Activated CD8-positive, alpha-beta T cell treated with anti-CD3 and anti-CD28 coated beads for 36 hours (primary cell): ENCODE measurements at regions of chr6 and their contacts with region 1.

Region 1: DNA sequence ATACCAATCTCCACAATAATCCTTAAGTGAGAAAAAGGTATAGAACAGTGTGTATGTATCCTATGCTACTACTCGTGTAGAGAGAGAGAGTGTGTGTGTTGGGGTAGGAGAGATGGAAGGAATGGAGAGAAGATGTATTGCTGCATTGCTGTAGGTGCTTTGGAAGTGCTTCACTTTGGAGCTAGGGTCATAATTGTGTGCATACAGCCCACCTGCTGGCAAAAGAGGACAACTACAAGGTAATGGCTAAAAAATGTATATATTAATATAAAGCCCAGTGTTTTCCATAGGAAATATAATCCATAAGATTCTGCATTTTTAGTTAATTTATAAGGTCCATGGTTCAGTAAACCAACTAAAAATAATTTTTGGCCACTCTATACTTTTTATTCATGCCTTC is 36.1 kb downstream of the SERAC1 start:
- DNase-seq: peak; percentile 16
- ATAC-seq: peak; percentile 67
- H3K4me3 Mint-ChIP-seq: no peak overlapping the region
- H3K27ac Mint-ChIP-seq: no peak overlapping the region
- H3K4me1 Mint-ChIP-seq: no peaks in the 10 kb centered on the region
- H3K27me3 Mint-ChIP-seq: no peaks in the 10 kb centered on the region
- CTCF ChIP-seq: peak; percentile 48

Region 2: DNA sequence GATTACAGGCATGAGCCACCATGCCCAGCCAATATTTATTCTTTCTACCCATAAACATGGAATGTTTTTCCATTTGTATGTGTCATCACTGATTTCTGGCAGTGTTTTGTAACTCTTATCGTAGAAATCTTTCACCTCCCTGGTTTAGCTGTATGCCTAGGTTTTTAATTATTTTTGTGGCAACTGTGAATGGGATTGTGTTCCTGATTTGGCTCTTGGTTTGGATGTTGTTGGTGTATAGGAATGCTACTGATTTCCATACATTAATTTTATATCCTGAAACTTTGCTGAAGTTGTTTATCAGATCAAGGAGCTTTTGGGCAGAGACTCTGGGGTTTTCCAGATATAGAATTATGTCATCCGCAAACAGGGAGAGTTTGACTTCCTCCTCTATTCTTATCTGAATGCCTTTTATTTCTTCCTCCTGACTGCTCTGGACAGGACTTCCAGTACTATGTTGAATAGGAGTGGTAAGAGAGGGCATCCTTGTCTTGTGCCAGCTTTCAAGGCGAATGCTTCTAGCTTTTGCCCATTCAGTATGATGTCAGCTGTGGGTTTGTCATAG is 552.4 kb before region 1 on chr6:
- CTCF ChIA-PET with region 1: no interaction called
- POLR2A ChIA-PET with region 1: no interaction called
- intact Hi-C with region 1: no loop called
- DNase-seq: no peak
- ATAC-seq: no peak
- H3K4me3 Mint-ChIP-seq: no peak overlapping the region
- H3K27ac Mint-ChIP-seq: no peak overlapping the region
- H3K4me1 Mint-ChIP-seq: peaks cover 4% of the 10 kb centered on the region
- H3K27me3 Mint-ChIP-seq: peaks cover 2% of the 10 kb centered on the region
- CTCF ChIP-seq: no peak

Region 3: GRCh38 chr6:158026054-158026900 is 105.6 kb before region 1 on chr6:
- CTCF ChIA-PET with region 1: no interaction called
- POLR2A ChIA-PET with region 1: no interaction called
- intact Hi-C with region 1: no loop called
- DNase-seq: peak; percentile 93
- ATAC-seq: peak; percentile 80
- H3K4me3 Mint-ChIP-seq: peak overlapping the region; percentile 74
- H3K27ac Mint-ChIP-seq: peak overlapping the region; percentile 100
- H3K4me1 Mint-ChIP-seq: peaks cover 34% of the 10 kb centered on the region
- H3K27me3 Mint-ChIP-seq: no peaks in the 10 kb centered on the region
- CTCF ChIP-seq: peak; percentile 92

Region 4: GRCh38 chr6:158143700-158144099 is 11.8 kb after region 1 on chr6:
- CTCF ChIA-PET with region 1: interaction called, 22 read pairs
- POLR2A ChIA-PET with region 1: no interaction called
- intact Hi-C with region 1: no loop called
- DNase-seq: no peak
- ATAC-seq: peak; percentile 39
- H3K4me3 Mint-ChIP-seq: no peak overlapping the region
- H3K27ac Mint-ChIP-seq: no peak overlapping the region
- H3K4me1 Mint-ChIP-seq: no peaks in the 10 kb centered on the region
- H3K27me3 Mint-ChIP-seq: no peaks in the 10 kb centered on the region
- CTCF ChIP-seq: peak; percentile 58

Region 5: GRCh38 chr6:158149641-158150040 is 17.7 kb after region 1 on chr6:
- CTCF ChIA-PET with region 1: interaction called, 22 read pairs
- POLR2A ChIA-PET with region 1: no interaction called
- intact Hi-C with region 1: no loop called
- DNase-seq: no peak
- ATAC-seq: no peak
- H3K4me3 Mint-ChIP-seq: no peak overlapping the region
- H3K27ac Mint-ChIP-seq: no peak overlapping the region
- H3K4me1 Mint-ChIP-seq: no peaks in the 10 kb centered on the region
- H3K27me3 Mint-ChIP-seq: no peaks in the 10 kb centered on the region
- CTCF ChIP-seq: no peak

Region 6: GRCh38 chr6:158270389-158271127 is 138.6 kb after region 1 on chr6:
- CTCF ChIA-PET with region 1: no interaction called
- POLR2A ChIA-PET with region 1: no interaction called
- intact Hi-C with region 1: no loop called
- DNase-seq: peak; percentile 41
- ATAC-seq: no peak
- H3K4me3 Mint-ChIP-seq: no peak overlapping the region
- H3K27ac Mint-ChIP-seq: peak overlapping the region; percentile 59
- H3K4me1 Mint-ChIP-seq: peaks cover 25% of the 10 kb centered on the region
- H3K27me3 Mint-ChIP-seq: no peaks in the 10 kb centered on the region
- CTCF ChIP-seq: no peak